ENCODE measurements at regions of chr16 and their contacts with region 1.

Region 1: DNA sequence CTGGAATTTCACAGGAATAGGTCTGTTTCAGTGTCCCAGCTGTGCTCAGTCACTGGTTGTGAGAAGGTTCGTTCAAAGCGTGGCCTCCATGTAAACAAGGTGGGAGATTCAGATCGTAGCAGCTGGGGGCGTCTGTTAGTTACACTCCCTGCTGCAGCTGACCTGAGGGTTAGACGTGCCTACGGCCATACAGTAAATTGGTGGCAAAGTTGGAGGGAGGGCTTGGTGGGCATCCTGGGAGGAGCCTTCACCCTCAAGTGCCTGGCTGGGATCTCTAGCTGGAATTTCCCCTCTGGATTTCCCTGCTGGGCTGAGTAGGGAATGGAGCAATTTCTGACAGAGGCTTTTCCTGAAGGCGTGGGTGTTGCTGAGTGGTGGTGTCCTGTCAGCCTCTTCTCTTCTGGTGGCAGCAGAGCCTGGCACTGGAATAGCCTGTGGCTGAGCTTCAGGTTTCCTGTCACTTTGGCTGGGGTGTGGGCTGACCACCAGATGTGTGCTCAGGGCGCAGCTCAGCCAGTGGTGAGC is 6.4 kb downstream of the FCSK start:
- DNase-seq: no peak
- H3K4me3 ChIP-seq: no peak overlapping the region
- H3K27ac ChIP-seq: no peak overlapping the region
- H3K4me1 ChIP-seq: peaks cover 25% of the 10 kb centered on the region
- CTCF ChIP-seq: no peak

Region 2: GRCh38 chr16:70438969-70439862 is 21.6 kb before region 1 on chr16 and contains the start of gene ST3GAL2:
- CTCF ChIA-PET with region 1: interaction called, 11 read pairs
- POLR2A ChIA-PET with region 1: interaction called, 9 read pairs
- intact Hi-C with region 1: loop called (anchors 2 kb)
- DNase-seq: peak; percentile 96
- H3K4me3 ChIP-seq: peak within 1 kb of the TSS; percentile 97
- H3K27ac ChIP-seq: peak within 1 kb of the TSS; percentile 68
- H3K4me1 ChIP-seq: peaks cover 31% of the 10 kb centered on the region
- CTCF ChIP-seq: no peak
- total RNA-seq, gene ST3GAL2: 42.6 and 44.6 TPM in 2 replicates

Region 3: DNA sequence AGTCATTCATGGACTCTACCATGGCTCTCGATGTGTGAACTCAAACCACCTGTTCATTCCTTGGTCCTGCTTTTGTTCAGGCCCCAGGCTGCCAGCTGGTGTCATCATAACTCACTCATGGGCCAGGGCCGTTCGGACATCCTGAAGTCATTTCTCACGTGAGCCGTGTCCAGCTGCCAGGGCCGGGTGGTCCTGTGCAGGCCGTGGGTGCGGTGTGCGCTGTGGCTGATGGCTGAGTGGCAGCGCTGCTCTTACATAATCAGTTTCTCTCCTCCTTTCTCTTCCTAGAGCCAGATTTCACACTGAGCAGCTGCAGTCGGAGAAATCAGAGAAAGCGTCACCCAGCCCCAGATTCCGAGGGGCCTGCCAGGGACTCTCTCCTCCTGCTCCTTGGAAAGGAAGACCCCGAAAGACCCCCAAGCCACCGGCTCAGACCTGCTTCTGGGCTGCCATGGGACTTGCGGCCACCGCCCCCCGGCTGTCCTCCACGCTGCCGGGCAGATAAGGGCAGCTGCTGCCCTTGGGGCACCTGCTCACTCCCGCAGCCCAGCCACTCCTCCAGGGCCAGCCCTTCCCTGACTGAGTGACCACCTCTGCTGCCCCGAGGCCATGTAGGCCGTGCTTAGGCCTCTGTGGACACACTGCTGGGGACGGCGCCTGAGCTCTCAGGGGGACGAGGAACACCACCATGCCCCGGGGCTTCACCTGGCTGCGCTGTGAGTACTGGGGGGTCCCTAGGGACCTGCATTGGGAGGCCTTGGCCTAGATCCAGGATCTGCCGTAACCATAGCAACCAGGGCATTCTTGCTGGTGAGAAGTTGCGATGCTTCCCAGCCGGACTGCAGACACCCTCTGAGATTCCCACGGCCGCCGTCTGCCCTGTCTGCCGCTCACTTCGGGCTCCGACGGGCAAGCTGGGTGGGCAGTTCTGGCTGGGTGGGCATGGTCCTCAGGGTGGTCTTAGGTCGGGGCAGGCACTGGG is 185.8 kb after region 1 on chr16 and contains the start of gene IL34:
- CTCF ChIA-PET with region 1: no interaction called
- POLR2A ChIA-PET with region 1: no interaction called
- intact Hi-C with region 1: no loop called
- DNase-seq: no peak
- H3K4me3 ChIP-seq: no peak within 1 kb of the TSS
- H3K27ac ChIP-seq: no peak within 1 kb of the TSS
- H3K4me1 ChIP-seq: no peaks in the 10 kb centered on the region
- CTCF ChIP-seq: no peak
- total RNA-seq, gene IL34: not detected in 2 replicates

Measured in OCI-LY7 (cell line).